A673 (cell line): ENCODE measurements at regions of chr5 and their contacts with region 1.

Region 1: GRCh38 chr5:141960449-141961202 is 2.6 kb upstream of the PCDH12 start:
- DNase-seq: peak; percentile 93
- H3K4me3 ChIP-seq: no peak overlapping the region
- H3K27ac ChIP-seq: no peak overlapping the region
- H3K4me1 ChIP-seq: peaks cover 28% of the 10 kb centered on the region
- H3K27me3 ChIP-seq: no peaks in the 10 kb centered on the region
- CTCF ChIP-seq: peak; percentile 94

Region 2: GRCh38 chr5:141570655-141571054 is 390.0 kb before region 1 on chr5:
- CTCF ChIA-PET with region 1: interaction called, 10 read pairs
- POLR2A ChIA-PET with region 1: no interaction called
- intact Hi-C with region 1: no loop called
- DNase-seq: no peak
- H3K4me3 ChIP-seq: no peak overlapping the region
- H3K27ac ChIP-seq: no peak overlapping the region
- H3K4me1 ChIP-seq: no peaks in the 10 kb centered on the region
- H3K27me3 ChIP-seq: no peaks in the 10 kb centered on the region
- CTCF ChIP-seq: no peak

Region 3: DNA sequence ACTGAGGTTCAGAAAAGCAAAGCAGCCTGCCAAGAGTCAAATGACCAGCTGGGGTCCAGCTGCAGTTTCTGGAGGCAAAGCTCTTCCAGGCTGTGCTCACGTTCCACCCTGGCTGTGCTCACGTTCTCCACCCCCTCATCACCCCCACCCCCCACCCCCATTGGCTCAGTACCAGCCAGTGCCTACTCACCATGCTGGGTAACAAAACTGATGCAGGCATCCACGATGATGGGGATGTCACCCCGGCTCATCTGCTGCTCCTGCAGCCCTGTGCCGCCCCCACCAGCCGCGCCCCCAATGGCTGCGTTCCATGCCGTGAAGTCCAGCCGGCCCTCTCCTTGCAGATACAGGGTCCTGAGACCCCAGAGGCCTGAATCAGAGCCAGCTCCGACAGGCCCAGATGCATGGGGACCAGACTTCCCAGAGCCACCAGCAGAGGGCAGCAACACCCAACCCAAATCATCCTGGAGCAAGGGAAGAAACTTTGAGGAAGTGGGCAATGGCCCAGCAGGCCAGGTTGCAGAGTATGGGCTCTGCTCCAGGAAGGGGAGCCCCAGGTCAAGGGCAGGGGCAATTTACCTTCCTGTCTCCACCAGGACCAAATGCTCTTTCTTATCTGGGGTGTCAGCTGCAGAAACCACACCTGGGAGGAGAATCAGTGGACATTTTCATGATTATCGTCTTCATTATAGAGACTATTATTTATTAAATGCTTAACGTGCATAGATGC is 295.7 kb before region 1 on chr5:
- CTCF ChIA-PET with region 1: interaction called, 5 read pairs
- POLR2A ChIA-PET with region 1: no interaction called
- intact Hi-C with region 1: loop called (anchors 2 kb)
- DNase-seq: peak; percentile 77
- H3K4me3 ChIP-seq: no peak overlapping the region
- H3K27ac ChIP-seq: no peak overlapping the region
- H3K4me1 ChIP-seq: peaks cover 3% of the 10 kb centered on the region
- H3K27me3 ChIP-seq: no peaks in the 10 kb centered on the region
- CTCF ChIP-seq: peak; percentile 92

Region 4: DNA sequence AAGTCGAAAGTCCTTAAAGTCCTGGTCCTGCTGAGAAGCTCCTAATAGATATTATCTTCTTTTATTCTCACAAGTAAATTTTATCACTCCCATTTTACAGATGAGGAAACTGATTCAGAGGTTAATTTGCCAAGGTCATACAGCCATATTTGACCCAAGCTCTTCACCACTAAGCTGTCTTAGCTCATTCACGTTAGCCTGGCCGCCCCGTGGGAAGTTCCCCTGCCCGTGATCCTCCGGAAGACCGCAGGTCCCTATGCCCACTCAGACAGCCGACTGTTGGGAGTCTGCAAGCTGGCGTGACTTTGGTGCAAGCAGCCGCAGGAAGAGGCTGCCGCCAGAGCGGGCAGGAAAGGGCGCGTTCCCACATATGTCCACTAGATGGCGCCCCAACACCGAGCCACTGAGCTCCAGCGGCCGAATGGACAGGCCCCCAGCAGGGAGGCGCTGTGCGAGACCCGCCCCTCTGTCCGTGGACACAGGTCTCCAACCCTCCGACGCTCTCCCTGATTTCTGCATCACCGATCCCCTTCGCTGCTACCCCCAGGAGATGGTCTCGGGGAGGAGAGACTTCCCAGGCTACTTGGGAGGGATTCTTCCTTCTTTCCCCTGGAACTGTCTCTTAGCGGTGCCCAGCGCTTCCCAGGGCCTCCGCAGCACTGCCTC is 268.6 kb before region 1 on chr5:
- CTCF ChIA-PET with region 1: interaction called, 47 read pairs
- POLR2A ChIA-PET with region 1: interaction called, 3 read pairs
- intact Hi-C with region 1: loop called (anchors 1 kb)
- DNase-seq: peak; percentile 86
- H3K4me3 ChIP-seq: peak overlapping the region; percentile 44
- H3K27ac ChIP-seq: no peak overlapping the region
- H3K4me1 ChIP-seq: peaks cover 28% of the 10 kb centered on the region
- H3K27me3 ChIP-seq: no peaks in the 10 kb centered on the region
- CTCF ChIP-seq: peak; percentile 96

Region 5: DNA sequence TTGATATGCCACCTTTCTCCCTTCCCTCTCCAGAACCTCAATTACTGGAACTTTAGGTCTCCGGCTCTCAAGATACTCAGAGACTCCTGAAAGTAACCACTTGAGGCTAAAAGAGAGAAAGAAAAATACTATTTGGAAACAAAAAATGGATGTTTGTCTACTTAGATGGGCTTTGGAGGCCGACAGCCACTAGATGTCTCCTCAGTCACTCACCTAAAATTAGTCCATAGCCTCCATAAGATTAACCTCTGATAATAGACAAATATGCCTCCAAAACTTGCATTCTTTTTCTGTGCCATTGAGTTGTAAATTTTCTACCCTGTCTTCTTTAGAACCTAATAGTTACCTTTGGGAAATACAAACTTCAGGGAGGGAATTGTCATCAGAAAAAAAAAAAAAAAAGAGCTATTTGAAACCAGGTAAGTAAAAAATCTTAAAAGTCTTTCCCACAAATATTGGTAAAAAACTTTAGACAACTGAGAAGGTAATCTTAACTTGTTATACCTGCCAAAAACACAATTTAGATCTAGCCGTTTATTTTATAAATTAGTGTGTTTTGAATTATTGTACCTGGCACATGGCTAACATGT is 71.2 kb before region 1 on chr5:
- CTCF ChIA-PET with region 1: no interaction called
- POLR2A ChIA-PET with region 1: no interaction called
- intact Hi-C with region 1: loop called (anchors 2 kb)
- DNase-seq: no peak
- H3K4me3 ChIP-seq: no peak overlapping the region
- H3K27ac ChIP-seq: no peak overlapping the region
- H3K4me1 ChIP-seq: no peaks in the 10 kb centered on the region
- H3K27me3 ChIP-seq: peaks cover 10% of the 10 kb centered on the region
- CTCF ChIP-seq: peak; percentile 52